GM12878 (cell line): ENCODE measurements at regions of chr7 and their contacts with region 1.

Region 1: GRCh38 chr7:37916673-37917660 is at the start of gene SFRP4:
- DNase-seq: no peak
- ATAC-seq: peak; percentile 44
- H3K4me3 ChIP-seq: peak within 1 kb of the TSS; percentile 48
- H3K27ac ChIP-seq: no peak within 1 kb of the TSS
- H3K4me1 ChIP-seq: peaks cover 13% of the 10 kb centered on the region
- H3K27me3 ChIP-seq: peaks cover 0 to 4% of the 10 kb centered on the region in 2 experiments; a peak in 2 of 4 replicates
- CTCF ChIP-seq: peak; percentile 72 to 74 (median 73)
- EP300 ChIP-seq: no peak
- POLR2A ChIP-seq: no peak
- RAD21 ChIP-seq: peak; percentile 67
- polyA plus RNA-seq, gene SFRP4: 0.02 TPM in 1 of 2 experiments, not detected in the other

Region 2: GRCh38 chr7:37901236-37901827 is 15.6 kb before region 1 on chr7:
- CTCF ChIA-PET with region 1: interaction called, 39 read pairs
- POLR2A ChIA-PET with region 1: no interaction called
- RAD21 ChIA-PET with region 1: interaction called, 24 read pairs
- SMC1A ChIA-PET with region 1: interaction called, 82 read pairs
- in situ Hi-C with region 1: no loop called
- intact Hi-C with region 1: no loop called
- DNase-seq: no peak
- ATAC-seq: peak; percentile 78
- H3K4me3 ChIP-seq: no peak overlapping the region
- H3K27ac ChIP-seq: no peak overlapping the region
- H3K4me1 ChIP-seq: no peaks in the 10 kb centered on the region
- H3K27me3 ChIP-seq: peaks cover 0 to 2% of the 10 kb centered on the region in 2 experiments; a peak in 1 of 4 replicates
- CTCF ChIP-seq: peak; percentile 47 to 59 (median 50); a peak in 5 of 6 replicates
- EP300 ChIP-seq: no peak
- POLR2A ChIP-seq: no peak
- RAD21 ChIP-seq: peak; percentile 64

Region 3: GRCh38 chr7:37952240-37952639 is 35.3 kb after region 1 on chr7:
- CTCF ChIA-PET with region 1: interaction called, 108 read pairs
- POLR2A ChIA-PET with region 1: interaction called, 11 read pairs
- RAD21 ChIA-PET with region 1: interaction called, 5 read pairs
- SMC1A ChIA-PET with region 1: interaction called, 98 read pairs
- in situ Hi-C with region 1: no loop called
- intact Hi-C with region 1: no loop called
- DNase-seq: no peak
- ATAC-seq: no peak
- H3K4me3 ChIP-seq: no peak overlapping the region
- H3K27ac ChIP-seq: no peak overlapping the region
- H3K4me1 ChIP-seq: no peaks in the 10 kb centered on the region
- H3K27me3 ChIP-seq: no peaks in the 10 kb centered on the region
- CTCF ChIP-seq: no peak
- EP300 ChIP-seq: no peak
- POLR2A ChIP-seq: no peak
- RAD21 ChIP-seq: no peak

Region 4: DNA sequence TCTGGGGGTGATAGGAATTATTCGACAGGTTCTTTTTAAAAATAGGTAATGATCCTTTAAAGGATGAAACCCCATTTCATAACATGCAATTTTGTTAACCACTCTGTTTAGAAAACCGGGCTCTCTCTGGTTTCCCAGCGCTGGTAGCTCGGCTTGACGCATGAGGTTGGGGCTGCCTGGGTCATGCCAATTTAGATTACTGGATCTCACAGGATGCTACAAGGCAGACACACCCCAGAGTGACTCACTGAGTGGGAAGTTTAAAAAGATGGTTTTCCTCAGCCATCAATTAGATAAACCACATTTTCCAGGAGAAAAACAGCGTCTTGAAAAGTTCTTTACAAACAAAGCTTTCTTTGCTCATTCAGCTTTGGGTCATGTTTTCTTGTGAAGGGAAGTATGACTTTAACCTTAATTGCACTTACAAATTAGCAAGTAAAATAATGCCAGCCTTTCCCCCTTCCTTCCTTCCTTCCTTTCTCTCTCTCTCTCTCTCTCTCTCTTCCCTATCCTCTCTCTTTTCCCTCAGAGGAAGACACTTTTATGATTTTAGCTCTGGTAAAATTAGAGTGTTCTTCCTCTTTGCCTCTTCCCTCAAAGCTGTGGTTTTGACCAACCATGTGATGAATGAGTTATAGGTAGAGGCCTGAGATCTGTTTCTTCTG is 103.3 kb after region 1 on chr7:
- CTCF ChIA-PET with region 1: interaction called, 14 read pairs
- POLR2A ChIA-PET with region 1: no interaction called
- RAD21 ChIA-PET with region 1: interaction called, 11 read pairs
- SMC1A ChIA-PET with region 1: interaction called, 14 read pairs
- in situ Hi-C with region 1: no loop called
- intact Hi-C with region 1: loop called (anchors 5 kb)
- DNase-seq: no peak
- ATAC-seq: no peak
- H3K4me3 ChIP-seq: no peak overlapping the region
- H3K27ac ChIP-seq: no peak overlapping the region
- H3K4me1 ChIP-seq: no peaks in the 10 kb centered on the region
- H3K27me3 ChIP-seq: no peaks in the 10 kb centered on the region; a peak in 1 of 4 replicates
- CTCF ChIP-seq: no peak
- EP300 ChIP-seq: no peak
- POLR2A ChIP-seq: no peak
- RAD21 ChIP-seq: no peak

Region 5: DNA sequence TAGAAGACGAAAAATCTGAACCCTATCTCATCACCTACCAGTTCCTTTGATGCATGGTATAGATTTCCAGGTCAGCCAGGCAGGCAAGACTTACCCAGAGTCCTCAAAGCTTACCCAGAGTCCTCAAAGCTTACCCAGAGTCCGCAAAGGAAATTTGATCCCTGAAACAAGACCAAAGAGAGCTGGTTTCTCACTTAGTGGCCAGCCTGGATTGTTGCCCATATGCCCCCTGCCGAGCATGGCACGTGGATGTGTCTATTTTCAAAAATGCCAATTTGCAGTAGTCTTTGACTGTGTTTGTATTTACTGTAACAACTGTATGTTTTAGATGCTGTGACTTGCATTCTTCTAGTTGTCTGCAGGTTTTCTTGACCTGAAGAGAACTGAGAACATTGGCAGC is 140.9 kb after region 1 on chr7:
- CTCF ChIA-PET with region 1: interaction called, 9 read pairs
- POLR2A ChIA-PET with region 1: no interaction called
- RAD21 ChIA-PET with region 1: interaction called, 14 read pairs
- SMC1A ChIA-PET with region 1: no interaction called
- in situ Hi-C with region 1: no loop called
- intact Hi-C with region 1: no loop called
- DNase-seq: no peak
- ATAC-seq: no peak
- H3K4me3 ChIP-seq: no peak overlapping the region
- H3K27ac ChIP-seq: no peak overlapping the region
- H3K4me1 ChIP-seq: no peaks in the 10 kb centered on the region
- H3K27me3 ChIP-seq: no peaks in the 10 kb centered on the region; a peak in 1 of 4 replicates
- CTCF ChIP-seq: no peak
- EP300 ChIP-seq: no peak
- POLR2A ChIP-seq: no peak
- RAD21 ChIP-seq: no peak

Region 6: DNA sequence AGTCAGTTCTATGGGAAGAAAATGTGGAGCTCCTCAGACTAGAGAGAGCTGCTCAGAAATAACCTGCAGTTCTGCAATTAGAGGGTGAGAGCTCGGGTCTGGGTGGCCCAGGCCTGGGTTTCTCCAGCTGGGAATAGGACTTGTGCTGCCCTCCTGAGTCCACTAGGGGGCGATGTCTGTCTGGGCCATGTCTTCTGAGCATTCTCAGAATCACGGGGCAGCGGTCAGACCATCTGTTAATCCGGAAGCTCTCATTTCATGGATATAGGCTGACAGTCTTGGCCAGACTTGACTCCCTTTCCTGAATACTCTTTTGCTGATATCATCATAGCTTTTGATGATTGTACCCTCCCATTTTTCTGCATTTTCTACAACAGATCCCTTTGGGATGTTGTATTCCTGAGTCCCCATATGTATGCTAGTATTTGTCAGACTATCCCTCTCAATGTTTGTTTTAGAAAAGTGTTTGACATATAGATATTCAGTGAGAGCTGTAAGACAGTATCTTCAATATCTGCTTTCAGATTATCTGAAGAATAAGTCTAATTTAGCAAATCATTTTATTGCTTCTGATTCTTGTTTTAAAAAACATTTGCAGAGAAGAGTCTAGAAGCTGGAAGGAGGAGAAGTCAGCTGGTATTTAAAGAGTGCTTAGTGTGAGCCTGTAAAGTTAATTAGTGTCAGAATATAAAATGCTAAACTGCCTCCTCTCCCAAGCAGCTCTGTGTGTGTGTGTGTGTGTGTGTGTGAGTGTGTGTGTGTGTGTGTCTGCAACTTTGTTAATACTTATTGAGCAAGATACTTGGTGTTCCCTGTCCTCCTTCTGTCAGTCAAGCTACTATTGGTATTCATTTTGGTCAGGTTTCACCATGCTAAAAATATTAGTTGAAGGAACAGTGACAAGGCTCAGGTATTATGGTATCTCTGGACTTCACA is 299.0 kb after region 1 on chr7:
- CTCF ChIA-PET with region 1: interaction called, 53 read pairs
- POLR2A ChIA-PET with region 1: no interaction called
- RAD21 ChIA-PET with region 1: interaction called, 20 read pairs
- SMC1A ChIA-PET with region 1: interaction called, 17 read pairs
- in situ Hi-C with region 1: no loop called
- intact Hi-C with region 1: loop called (anchors 5 kb)
- DNase-seq: peak; percentile 36
- ATAC-seq: peak; percentile 99
- H3K4me3 ChIP-seq: no peak overlapping the region
- H3K27ac ChIP-seq: peak overlapping the region; percentile 14; the same call in 1 of the 2 replicates
- H3K4me1 ChIP-seq: no peaks in the 10 kb centered on the region
- H3K27me3 ChIP-seq: no peaks in the 10 kb centered on the region
- CTCF ChIP-seq: peak; percentile 94 to 99 (median 98)
- EP300 ChIP-seq: no peak
- POLR2A ChIP-seq: no peak
- RAD21 ChIP-seq: peak; percentile 84

Region 7: GRCh38 chr7:38369816-38370493 is 453.0 kb after region 1 on chr7:
- CTCF ChIA-PET with region 1: interaction called, 46 read pairs
- POLR2A ChIA-PET with region 1: no interaction called
- RAD21 ChIA-PET with region 1: interaction called, 4 read pairs
- SMC1A ChIA-PET with region 1: interaction called, 6 read pairs
- in situ Hi-C with region 1: no loop called
- intact Hi-C with region 1: no loop called
- DNase-seq: no peak
- ATAC-seq: peak; percentile 87
- H3K4me3 ChIP-seq: no peak overlapping the region
- H3K27ac ChIP-seq: peak overlapping the region; percentile 22; the same call in 1 of the 2 replicates
- H3K4me1 ChIP-seq: peaks cover 31% of the 10 kb centered on the region
- H3K27me3 ChIP-seq: no peaks in the 10 kb centered on the region
- CTCF ChIP-seq: peak; percentile 81 to 99 (median 96)
- EP300 ChIP-seq: no peak
- POLR2A ChIP-seq: no peak
- RAD21 ChIP-seq: no peak